ENCODE measurements at regions of chr16 and their contacts with region 1.

Region 1: DNA sequence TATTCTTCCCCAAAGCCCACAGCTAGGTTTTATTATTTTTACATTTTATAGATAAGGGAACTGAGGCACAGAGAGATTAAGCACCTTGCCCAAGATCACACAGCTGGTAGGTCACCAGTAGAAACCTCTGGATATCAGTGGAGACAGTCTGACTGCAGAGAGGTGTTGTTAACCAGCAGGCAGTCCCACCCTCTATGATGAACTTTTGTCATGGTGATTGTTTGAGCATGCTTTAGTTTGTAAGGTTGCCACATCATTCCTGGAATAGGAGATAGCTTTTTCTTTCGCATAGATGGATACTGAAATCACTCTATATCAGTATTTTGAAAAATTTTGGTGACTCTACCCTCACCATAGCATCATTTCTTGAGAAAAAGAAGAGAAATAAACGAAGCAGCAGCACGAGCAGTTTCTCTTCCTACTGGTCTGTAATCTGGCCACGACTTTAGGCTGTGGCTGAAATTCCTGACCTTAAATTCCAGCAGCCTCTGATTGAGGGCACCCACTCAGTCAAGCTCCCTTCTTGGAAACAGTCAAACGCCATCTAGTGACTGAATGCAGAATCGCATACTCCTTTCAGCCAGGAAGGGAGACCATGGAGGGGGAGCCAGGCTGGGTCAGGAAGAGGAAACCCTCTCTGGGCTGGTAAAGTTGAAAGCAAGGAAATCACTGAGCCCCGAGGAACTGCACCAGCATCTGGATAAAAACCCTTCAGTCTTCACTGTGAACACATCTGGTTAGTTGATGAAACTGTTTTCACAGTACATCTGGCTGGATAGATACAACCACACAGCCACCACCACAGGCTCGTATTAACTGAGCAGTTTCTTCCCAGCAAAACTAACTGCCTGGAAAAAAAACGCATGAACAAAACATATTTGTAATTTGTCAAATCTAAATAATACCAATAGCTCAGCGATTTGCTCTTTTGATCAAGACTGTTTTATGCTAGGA is 108.4 kb upstream of the XYLT1 start:
- DNase-seq: peak; percentile 69
- H3K4me3 ChIP-seq: no peak overlapping the region
- H3K27ac ChIP-seq: no peak overlapping the region
- H3K4me1 ChIP-seq: no peaks in the 10 kb centered on the region
- H3K27me3 ChIP-seq: no peaks in the 10 kb centered on the region
- CTCF ChIP-seq: peak; percentile 41 to 81 (median 63)
- EP300 ChIP-seq: no peak
- POLR2A ChIP-seq: no peak

Region 2: DNA sequence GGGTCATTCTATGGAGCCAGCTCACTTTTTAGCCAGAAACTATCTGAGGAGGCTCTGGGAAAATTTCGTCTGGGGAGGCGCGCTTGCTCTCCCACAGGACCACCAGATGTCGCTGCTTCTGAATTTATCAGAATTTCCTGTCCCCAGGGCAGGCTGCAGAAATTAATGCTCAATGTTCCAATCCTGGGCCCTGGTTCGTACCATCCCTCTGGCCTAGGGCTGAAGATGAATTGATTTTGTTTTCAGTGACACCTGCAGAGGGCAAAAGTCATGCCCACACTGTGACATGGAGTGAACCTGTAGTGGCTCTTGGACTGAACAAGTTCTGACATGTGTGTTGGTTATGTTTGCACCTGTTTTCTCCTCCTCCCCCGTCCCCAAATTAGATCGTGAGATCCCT is 717.7 kb before region 1 on chr16:
- intact Hi-C with region 1: loop called (anchors 5 kb)
- DNase-seq: no peak
- H3K4me3 ChIP-seq: no peak overlapping the region
- H3K27ac ChIP-seq: no peak overlapping the region
- H3K4me1 ChIP-seq: no peaks in the 10 kb centered on the region
- H3K27me3 ChIP-seq: peaks cover 0 to 5% (median 0%) of the 10 kb centered on the region in 3 donors
- CTCF ChIP-seq: peak in 3 of 4 experiments; percentile 40 to 69 (median 57)
- EP300 ChIP-seq: no peak
- POLR2A ChIP-seq: no peak

Region 3: DNA sequence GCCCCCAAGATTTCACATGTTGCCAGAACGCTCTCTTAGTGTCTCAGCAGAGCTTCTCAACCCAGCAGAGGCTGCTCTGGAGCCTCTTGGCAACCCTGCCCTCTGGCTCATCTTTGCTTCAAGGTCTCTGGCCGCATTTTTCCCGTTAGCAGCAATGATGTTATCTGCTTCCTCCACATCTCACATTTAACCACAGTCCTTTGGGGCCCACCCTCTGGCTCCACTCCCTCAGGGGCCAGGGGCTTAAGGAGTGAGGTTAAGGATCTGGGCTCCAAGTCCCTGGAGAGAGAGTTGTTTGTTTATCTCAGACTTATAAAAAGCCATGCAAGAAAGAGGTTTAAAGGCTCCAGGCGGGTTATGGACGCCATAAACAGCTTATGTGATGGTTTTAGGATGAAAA is 105.1 kb before region 1 on chr16:
- intact Hi-C with region 1: loop called (anchors 1 kb)
- DNase-seq: no peak
- H3K4me3 ChIP-seq: no peak overlapping the region
- H3K27ac ChIP-seq: no peak overlapping the region
- H3K4me1 ChIP-seq: peaks cover 0 to 27% (median 13%) of the 10 kb centered on the region in 4 donors
- H3K27me3 ChIP-seq: peaks cover 0 to 8% (median 0%) of the 10 kb centered on the region in 3 donors
- CTCF ChIP-seq: no peak
- EP300 ChIP-seq: no peak
- POLR2A ChIP-seq: no peak

Region 4: GRCh38 chr16:17683281-17683680 is 104.1 kb after region 1 on chr16:
- intact Hi-C with region 1: no loop called
- DNase-seq: no peak
- H3K4me3 ChIP-seq: no peak overlapping the region
- H3K27ac ChIP-seq: no peak overlapping the region
- H3K4me1 ChIP-seq: no peaks in the 10 kb centered on the region
- H3K27me3 ChIP-seq: no peaks in the 10 kb centered on the region
- CTCF ChIP-seq: no peak
- EP300 ChIP-seq: no peak
- POLR2A ChIP-seq: no peak

Measured in sigmoid colon (tissue), 7 donors.